ENCODE measurements at regions of chr13 and their contacts with region 1.

Region 1: GRCh38 chr13:102800145-102801041 is 1.5 kb downstream of the BIVM start:
- DNase-seq: peak; percentile 83
- H3K4me3 Mint-ChIP-seq: peak overlapping the region; percentile 92
- H3K27ac Mint-ChIP-seq: peak overlapping the region; percentile 63
- H3K4me1 Mint-ChIP-seq: peaks cover 21% of the 10 kb centered on the region
- H3K27me3 Mint-ChIP-seq: no peaks in the 10 kb centered on the region
- CTCF ChIP-seq: peak; percentile 83

Region 2: GRCh38 chr13:101298517-101298916 is 1501.9 kb before region 1 on chr13:
- CTCF ChIA-PET with region 1: no interaction called
- POLR2A ChIA-PET with region 1: no interaction called
- intact Hi-C with region 1: no loop called
- DNase-seq: no peak
- H3K4me3 Mint-ChIP-seq: no peak overlapping the region
- H3K27ac Mint-ChIP-seq: no peak overlapping the region
- H3K4me1 Mint-ChIP-seq: no peaks in the 10 kb centered on the region
- H3K27me3 Mint-ChIP-seq: no peaks in the 10 kb centered on the region
- CTCF ChIP-seq: no peak

Region 3: GRCh38 chr13:102580552-102581169 is 219.7 kb before region 1 on chr13:
- CTCF ChIA-PET with region 1: interaction called, 13 read pairs
- POLR2A ChIA-PET with region 1: interaction called, 4 read pairs
- intact Hi-C with region 1: loop called (anchors 1 kb)
- DNase-seq: peak; percentile 74
- H3K4me3 Mint-ChIP-seq: no peak overlapping the region
- H3K27ac Mint-ChIP-seq: no peak overlapping the region
- H3K4me1 Mint-ChIP-seq: peaks cover 5% of the 10 kb centered on the region
- H3K27me3 Mint-ChIP-seq: peaks cover 13% of the 10 kb centered on the region
- CTCF ChIP-seq: peak; percentile 67

Region 4: GRCh38 chr13:102773441-102774215 is 26.8 kb before region 1 on chr13 and contains the start of gene TEX30:
- CTCF ChIA-PET with region 1: interaction called, 5 read pairs
- POLR2A ChIA-PET with region 1: interaction called, 51 read pairs
- intact Hi-C with region 1: loop called (anchors 1 kb)
- DNase-seq: peak; percentile 79
- H3K4me3 Mint-ChIP-seq: peak within 1 kb of the TSS; percentile 80
- H3K27ac Mint-ChIP-seq: peak within 1 kb of the TSS; percentile 87
- H3K4me1 Mint-ChIP-seq: peaks cover 18% of the 10 kb centered on the region
- H3K27me3 Mint-ChIP-seq: no peaks in the 10 kb centered on the region
- CTCF ChIP-seq: no peak
- total RNA-seq, gene TEX30: 10.7 and 14.2 TPM in 2 replicates

Region 5: DNA sequence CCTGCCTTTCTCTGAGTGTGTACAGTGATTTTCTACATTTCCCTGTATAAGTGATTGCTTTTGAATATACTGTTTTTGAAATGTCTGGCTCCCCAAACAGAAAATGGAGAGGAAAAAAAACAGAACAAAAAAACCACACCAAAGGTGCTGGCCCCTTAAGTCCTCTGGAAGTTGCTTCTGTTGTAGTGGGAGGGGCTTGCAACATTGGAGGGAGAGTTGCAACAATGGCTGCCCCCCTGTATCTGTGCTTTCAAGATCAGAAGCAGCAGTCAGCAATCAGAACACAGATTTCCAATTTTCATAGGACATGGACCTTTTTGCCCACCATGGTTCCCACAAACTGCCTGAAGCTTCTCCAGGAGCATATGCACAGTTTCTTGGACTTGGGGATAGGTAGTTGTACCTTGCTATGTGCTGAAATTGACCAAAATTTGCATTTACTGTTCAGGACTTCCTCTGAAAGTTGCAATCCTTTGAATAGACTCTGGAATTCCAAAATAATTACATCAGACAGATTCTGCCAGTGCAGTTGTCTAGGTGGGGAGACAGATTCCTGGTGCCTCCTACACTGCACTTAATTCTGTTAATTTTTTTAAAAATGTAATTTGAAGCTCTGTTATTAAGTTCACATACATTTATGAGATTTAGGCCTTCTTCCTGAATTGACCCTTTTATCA is 12.4 kb after region 1 on chr13:
- CTCF ChIA-PET with region 1: interaction called, 12 read pairs
- POLR2A ChIA-PET with region 1: interaction called, 15 read pairs
- intact Hi-C with region 1: no loop called
- DNase-seq: no peak
- H3K4me3 Mint-ChIP-seq: no peak overlapping the region
- H3K27ac Mint-ChIP-seq: peak overlapping the region; percentile 9
- H3K4me1 Mint-ChIP-seq: peaks cover 14% of the 10 kb centered on the region
- H3K27me3 Mint-ChIP-seq: no peaks in the 10 kb centered on the region
- CTCF ChIP-seq: no peak

Region 6: DNA sequence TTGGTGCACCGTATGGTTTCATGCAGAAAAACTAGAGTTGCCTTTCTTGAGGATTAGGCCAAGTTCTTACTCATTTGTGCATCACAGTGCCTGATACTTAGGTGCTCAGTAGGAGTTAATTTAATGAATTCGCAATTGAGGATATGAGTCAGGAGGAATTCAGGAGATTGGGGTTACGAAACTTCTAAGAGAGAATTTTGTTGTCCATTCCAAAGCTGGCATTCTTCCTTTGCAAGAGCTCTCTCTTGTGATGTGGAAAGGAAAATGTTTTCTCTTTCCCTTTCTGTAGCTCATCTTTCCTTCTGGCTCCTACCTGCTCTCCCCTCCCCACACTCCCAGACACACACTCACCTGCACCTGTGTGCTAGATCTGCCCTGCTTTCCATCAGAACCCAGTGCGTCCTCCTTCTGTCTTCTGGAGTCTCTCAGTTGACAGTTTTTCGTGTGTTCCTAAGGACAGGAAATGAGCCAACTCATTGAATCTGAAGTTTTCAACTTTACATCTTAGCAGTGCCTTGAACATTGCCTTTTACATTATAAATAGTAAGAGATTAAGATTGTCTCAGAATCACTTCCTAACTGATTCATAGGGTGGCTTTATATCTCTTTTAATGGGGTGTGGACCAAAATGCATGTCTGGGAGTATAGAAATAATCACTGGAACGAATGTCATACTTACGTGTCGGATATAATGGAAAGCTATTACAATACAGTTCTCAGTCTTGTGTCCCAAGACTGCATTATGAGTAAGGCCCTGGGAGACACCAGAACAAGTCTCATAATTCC is 25.7 kb after region 1 on chr13:
- CTCF ChIA-PET with region 1: interaction called, 10 read pairs
- POLR2A ChIA-PET with region 1: interaction called, 11 read pairs
- intact Hi-C with region 1: loop called (anchors 1 kb)
- DNase-seq: peak; percentile 91
- H3K4me3 Mint-ChIP-seq: peak overlapping the region; percentile 72
- H3K27ac Mint-ChIP-seq: peak overlapping the region; percentile 82
- H3K4me1 Mint-ChIP-seq: peaks cover 24% of the 10 kb centered on the region
- H3K27me3 Mint-ChIP-seq: no peaks in the 10 kb centered on the region
- CTCF ChIP-seq: peak; percentile 9

Region 7: DNA sequence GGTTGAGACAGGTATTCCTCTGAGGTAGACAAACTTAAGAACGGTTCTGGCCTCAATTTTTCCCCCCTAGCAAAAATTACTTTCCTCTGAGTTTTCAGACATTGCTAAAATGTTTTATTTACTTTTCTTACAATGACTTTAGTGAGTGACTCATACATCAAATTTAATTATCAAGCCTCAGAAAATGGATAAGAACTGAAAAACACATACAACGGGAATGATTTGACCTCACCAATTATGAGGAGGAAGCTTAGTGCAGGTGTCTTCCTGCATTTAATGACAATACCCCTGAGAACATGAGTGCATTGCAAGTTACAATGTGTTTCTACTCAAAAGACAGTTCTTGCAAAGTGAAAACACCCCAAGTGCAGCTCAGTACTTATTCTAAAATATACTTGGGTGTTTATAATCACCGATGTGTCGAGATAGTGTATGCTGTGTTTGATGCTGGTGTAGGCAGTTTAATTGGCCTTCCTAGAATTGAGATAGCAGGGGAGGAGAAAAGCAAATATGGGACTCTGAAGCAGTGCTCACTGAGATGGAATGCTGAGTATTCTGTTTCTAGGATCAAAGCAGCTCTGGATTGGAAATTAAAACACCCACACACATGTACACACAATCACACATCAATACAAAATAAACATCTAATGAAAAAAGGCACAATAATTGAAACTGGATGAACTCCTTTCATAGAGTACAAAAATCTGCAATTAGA is 455.4 kb after region 1 on chr13:
- CTCF ChIA-PET with region 1: no interaction called
- POLR2A ChIA-PET with region 1: no interaction called
- intact Hi-C with region 1: no loop called
- DNase-seq: no peak
- H3K4me3 Mint-ChIP-seq: no peak overlapping the region
- H3K27ac Mint-ChIP-seq: no peak overlapping the region
- H3K4me1 Mint-ChIP-seq: peaks cover 6% of the 10 kb centered on the region
- H3K27me3 Mint-ChIP-seq: no peaks in the 10 kb centered on the region
- CTCF ChIP-seq: no peak

Measured in MCF 10A (cell line).